ENCODE measurements at regions of chr5 and their contacts with region 1.

Region 1: DNA sequence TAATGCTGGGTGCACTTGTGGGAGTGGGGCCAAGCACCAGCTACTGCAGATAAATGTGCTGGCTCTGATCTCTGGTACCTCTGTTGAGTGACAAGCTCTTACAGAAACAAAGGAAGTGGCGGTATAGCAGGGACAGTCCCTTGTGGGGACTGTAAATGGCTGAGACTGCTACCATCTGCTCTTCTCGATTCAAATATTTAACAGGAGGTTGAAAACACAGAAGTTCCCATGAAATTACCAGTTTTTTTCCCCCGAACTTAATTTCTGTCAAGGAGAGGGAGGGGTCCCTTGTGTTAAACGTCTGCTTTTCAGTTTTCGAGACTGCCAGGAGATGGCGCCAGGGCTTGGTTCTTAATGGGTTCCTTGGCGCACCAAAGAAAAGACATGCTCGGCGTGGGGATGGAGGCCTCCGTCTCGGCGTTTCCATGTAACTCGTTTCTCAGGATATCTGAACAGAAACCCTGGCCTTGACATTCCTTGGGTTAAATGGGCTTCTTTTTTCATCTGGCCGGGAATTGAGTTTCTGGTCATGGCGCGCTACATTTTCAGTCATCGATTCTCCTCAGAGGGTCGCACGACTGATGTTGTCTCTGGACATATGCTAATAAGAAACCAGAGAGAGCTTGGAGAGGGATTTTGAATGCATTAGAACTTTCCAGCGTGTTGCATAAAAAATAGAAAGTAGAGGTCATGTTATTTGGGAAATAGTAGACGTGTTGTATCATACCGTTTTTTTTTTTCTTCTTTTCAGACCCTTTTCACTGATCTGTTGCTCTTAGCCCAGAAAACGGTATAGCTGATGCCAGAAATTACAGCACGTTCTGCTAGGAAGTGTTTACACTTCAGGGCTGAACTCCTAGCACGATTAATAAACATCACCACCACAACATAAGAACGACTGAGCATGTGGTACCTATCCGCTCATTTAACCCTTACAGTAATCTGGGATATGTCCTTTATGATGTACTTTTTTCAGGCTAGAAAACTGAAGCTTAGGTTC is 64.0 kb downstream of the CARTPT start:
- DNase-seq: peak; percentile 41 to 75
- ATAC-seq: peak; percentile 82 to 95
- H3K4me3 ChIP-seq: 0 out of 3 replicates have a peak overlapping the region, but pooled peaks have one; percentile 18
- H3K27ac ChIP-seq: peak overlapping the region; percentile 74 to 75
- H3K4me1 ChIP-seq: peaks cover 11% of the 10 kb centered on the region; the same call in 2 of the 3 replicates
- CTCF ChIP-seq: peak; percentile 95
- EP300 ChIP-seq: no peak
- POLR2A ChIP-seq: no peak
- RAD21 ChIP-seq: peak; percentile 92 to 97

Region 2: GRCh38 chr5:71767661-71768060 is 15.4 kb before region 1 on chr5:
- CTCF ChIA-PET with region 1: interaction called, 27 read pairs
- POLR2A ChIA-PET with region 1: no interaction called
- DNase-seq: no peak
- ATAC-seq: no peak
- H3K4me3 ChIP-seq: no peak overlapping the region
- H3K27ac ChIP-seq: no peak overlapping the region
- H3K4me1 ChIP-seq: no peaks in the 10 kb centered on the region
- CTCF ChIP-seq: no peak
- EP300 ChIP-seq: no peak
- POLR2A ChIP-seq: no peak
- RAD21 ChIP-seq: no peak

Region 3: GRCh38 chr5:71802673-71803072 is 19.6 kb after region 1 on chr5:
- CTCF ChIA-PET with region 1: interaction called, 10 read pairs
- POLR2A ChIA-PET with region 1: no interaction called
- DNase-seq: no peak
- ATAC-seq: no peak
- H3K4me3 ChIP-seq: no peak overlapping the region
- H3K27ac ChIP-seq: no peak overlapping the region
- H3K4me1 ChIP-seq: no peaks in the 10 kb centered on the region
- CTCF ChIP-seq: no peak
- EP300 ChIP-seq: no peak
- POLR2A ChIP-seq: no peak
- RAD21 ChIP-seq: no peak

Region 4: GRCh38 chr5:72108202-72109061 is 325.4 kb after region 1 on chr5:
- CTCF ChIA-PET with region 1: interaction called, 43 read pairs
- POLR2A ChIA-PET with region 1: interaction called, 9 read pairs
- DNase-seq: peak; percentile 61 to 70
- ATAC-seq: peak; percentile 60 to 70
- H3K4me3 ChIP-seq: peak overlapping the region; percentile 84
- H3K27ac ChIP-seq: peak overlapping the region; percentile 86 to 96
- H3K4me1 ChIP-seq: peaks cover 47% of the 10 kb centered on the region
- CTCF ChIP-seq: no peak
- EP300 ChIP-seq: no peak
- POLR2A ChIP-seq: peak; percentile 26; the same call in 1 of the 2 replicates
- RAD21 ChIP-seq: no peak

Region 5: GRCh38 chr5:72114629-72115028 is 331.6 kb after region 1 on chr5:
- CTCF ChIA-PET with region 1: interaction called, 43 read pairs
- POLR2A ChIA-PET with region 1: interaction called, 9 read pairs
- DNase-seq: no peak
- ATAC-seq: peak in 1 of 2 experiments; percentile 18; a peak in 1 of 6 replicates
- H3K4me3 ChIP-seq: no peak overlapping the region
- H3K27ac ChIP-seq: peak overlapping the region in 1 of 2 experiments; percentile 27; a peak in 1 of 6 replicates
- H3K4me1 ChIP-seq: peaks cover 55% of the 10 kb centered on the region
- CTCF ChIP-seq: no peak
- EP300 ChIP-seq: no peak
- POLR2A ChIP-seq: no peak
- RAD21 ChIP-seq: no peak

Region 6: GRCh38 chr5:72134226-72134899 is 351.3 kb after region 1 on chr5:
- CTCF ChIA-PET with region 1: interaction called, 11 read pairs
- POLR2A ChIA-PET with region 1: no interaction called
- DNase-seq: no peak
- ATAC-seq: peak; percentile 49 to 51; a peak in 3 of 6 replicates
- H3K4me3 ChIP-seq: no peak overlapping the region
- H3K27ac ChIP-seq: peak overlapping the region; percentile 54 to 75; a peak in 5 of 6 replicates
- H3K4me1 ChIP-seq: peaks cover 93% of the 10 kb centered on the region
- CTCF ChIP-seq: no peak
- EP300 ChIP-seq: no peak
- POLR2A ChIP-seq: no peak
- RAD21 ChIP-seq: no peak

Region 7: DNA sequence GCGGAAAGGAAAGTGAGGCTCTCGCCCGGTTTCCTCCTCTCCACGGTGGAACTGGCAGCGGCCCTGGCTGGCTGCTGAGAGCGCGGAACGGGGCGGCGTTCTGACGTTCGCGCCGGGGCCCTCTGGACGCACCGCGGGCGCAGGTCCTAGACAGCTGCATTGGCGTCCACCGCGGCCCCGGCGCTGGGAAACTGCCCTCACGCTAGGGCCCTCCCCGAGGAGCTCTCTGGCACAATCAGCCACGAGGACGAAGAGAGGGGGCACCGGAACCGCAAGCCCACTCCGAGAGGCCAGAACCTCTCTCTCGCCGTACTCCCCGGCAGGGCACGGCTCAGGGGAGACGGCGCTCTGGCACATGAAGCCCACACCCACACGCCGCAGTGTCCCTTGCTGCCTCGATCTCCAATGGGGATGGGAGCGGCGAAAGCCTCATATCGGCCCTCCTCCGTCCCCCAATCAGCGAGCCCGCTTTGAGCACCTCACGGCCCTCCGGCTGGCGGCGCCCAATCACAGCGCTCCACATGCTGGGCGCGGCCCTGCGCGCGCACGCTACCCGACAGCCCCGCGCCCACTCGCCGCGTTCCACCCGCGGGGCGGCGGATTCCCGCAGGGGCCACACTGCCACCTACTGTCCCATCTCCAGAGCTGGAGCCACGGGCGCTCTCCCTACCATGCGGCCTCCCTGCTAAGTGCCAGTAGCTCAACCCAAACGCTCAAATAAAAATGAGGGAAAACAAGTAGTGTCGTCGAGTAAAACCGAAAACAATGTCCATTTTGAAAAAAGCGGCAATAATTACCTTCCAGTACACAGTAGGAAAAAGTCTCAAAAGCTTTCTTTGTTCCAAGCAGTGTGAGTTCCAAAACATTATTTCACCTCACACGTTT is 525.1 kb after region 1 on chr5:
- CTCF ChIA-PET with region 1: interaction called, 25 read pairs
- POLR2A ChIA-PET with region 1: interaction called, 5 read pairs
- DNase-seq: peak; percentile 96 to 98
- ATAC-seq: peak; percentile 99
- H3K4me3 ChIP-seq: peak overlapping the region; percentile 51
- H3K27ac ChIP-seq: peak overlapping the region; percentile 89 to 96
- H3K4me1 ChIP-seq: peaks cover 24% of the 10 kb centered on the region
- CTCF ChIP-seq: peak; percentile 87
- EP300 ChIP-seq: no peak
- POLR2A ChIP-seq: peak; percentile 98
- RAD21 ChIP-seq: peak; percentile 61 to 90

Measured in A549 (cell line).